ENCODE measurements at regions of chr20 and their contacts with region 1.

Region 1: DNA sequence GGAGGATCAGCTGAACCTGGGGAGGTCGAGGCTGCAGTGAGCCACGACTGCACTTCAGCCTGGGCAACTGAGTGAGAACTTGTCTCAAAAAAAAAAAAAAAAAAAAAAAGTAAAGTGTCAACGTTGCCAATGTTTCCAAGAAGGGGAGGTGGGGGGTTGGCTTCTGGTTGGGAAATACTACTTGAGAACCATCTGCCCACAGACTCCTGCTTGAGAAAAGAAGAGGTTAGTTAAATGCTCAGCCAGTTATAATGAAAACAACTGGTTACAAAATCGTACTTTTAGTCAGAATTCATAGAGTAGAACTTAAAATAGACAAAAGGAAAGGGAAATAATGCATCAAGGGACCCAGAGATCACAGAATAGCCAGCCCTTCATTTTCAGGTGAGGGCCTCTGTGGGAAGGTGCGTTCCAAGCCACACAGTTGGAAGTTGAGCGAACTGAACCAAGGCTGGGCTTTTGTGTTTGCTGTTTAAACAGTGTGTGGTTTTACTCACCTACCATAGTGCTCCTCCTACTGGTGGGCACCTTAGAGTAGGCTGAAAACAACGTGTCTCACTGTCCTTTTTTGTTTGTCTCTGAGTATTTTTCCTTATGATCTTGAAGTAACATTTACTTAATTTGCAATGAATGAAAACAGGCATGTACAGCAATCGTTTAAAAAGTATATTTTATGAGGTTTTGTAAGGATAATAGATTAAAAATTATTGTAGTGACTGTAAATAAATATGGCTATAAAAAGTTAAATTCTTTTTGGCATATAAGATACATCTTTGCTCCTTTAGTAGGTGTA is 200.7 kb downstream of the BCAS1 start:
- DNase-seq: peak; percentile 83
- ATAC-seq: peak; percentile 84
- H3K4me3 Mint-ChIP-seq: peak overlapping the region; percentile 18
- H3K27ac Mint-ChIP-seq: peak overlapping the region; percentile 90
- H3K4me1 Mint-ChIP-seq: peaks cover 75% of the 10 kb centered on the region
- H3K27me3 Mint-ChIP-seq: no peaks in the 10 kb centered on the region

Region 2: GRCh38 chr20:53316221-53316937 is 553.3 kb before region 1 on chr20:
- CTCF ChIA-PET with region 1: no interaction called
- POLR2A ChIA-PET with region 1: no interaction called
- intact Hi-C with region 1: no loop called
- DNase-seq: no peak
- ATAC-seq: peak; percentile 78
- H3K4me3 Mint-ChIP-seq: no peak overlapping the region
- H3K27ac Mint-ChIP-seq: no peak overlapping the region
- H3K4me1 Mint-ChIP-seq: peaks cover 19% of the 10 kb centered on the region
- H3K27me3 Mint-ChIP-seq: no peaks in the 10 kb centered on the region

Region 3: DNA sequence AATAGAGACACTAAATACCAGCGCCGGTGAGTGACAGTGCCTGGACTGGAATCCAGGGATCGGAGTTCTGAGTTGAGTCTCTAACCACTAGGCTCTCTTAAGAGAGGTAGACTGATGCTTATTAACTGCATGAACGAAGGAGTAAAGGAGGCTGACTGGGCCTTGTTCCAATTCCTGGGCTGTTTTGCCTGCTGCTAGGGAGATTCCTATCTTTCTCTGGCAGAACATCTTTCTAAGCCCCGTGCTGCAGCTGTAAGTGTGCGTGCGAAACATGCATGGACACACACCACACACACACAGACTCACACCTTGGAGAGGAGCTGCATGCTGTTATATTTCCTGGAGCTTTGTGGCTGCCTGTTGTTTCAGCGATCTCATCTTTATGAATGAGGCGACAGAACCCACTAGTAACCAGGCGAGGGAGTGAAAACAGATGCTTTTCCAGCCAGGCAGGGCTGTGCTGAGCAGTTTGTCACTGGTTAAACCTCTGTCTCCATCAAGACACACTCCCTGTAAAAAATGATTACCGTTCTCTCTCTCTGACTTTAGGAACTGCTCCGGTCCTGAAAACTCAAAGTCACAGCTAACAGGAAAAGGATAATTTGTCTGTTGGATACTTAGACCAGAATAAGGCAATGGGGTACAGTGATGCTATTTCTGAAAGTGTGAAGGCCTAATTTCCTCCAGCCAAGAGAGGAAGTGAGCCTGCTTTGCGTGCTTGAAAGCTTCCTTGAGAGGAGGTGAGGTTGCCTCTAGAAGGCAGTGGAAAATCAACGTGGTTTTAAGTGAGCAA is 118.6 kb before region 1 on chr20:
- CTCF ChIA-PET with region 1: no interaction called
- POLR2A ChIA-PET with region 1: no interaction called
- intact Hi-C with region 1: loop called (anchors 5 kb)
- DNase-seq: peak; percentile 60
- ATAC-seq: peak; percentile 70
- H3K4me3 Mint-ChIP-seq: peak overlapping the region; percentile 22
- H3K27ac Mint-ChIP-seq: peak overlapping the region; percentile 96
- H3K4me1 Mint-ChIP-seq: peaks cover 73% of the 10 kb centered on the region
- H3K27me3 Mint-ChIP-seq: no peaks in the 10 kb centered on the region

Region 4: DNA sequence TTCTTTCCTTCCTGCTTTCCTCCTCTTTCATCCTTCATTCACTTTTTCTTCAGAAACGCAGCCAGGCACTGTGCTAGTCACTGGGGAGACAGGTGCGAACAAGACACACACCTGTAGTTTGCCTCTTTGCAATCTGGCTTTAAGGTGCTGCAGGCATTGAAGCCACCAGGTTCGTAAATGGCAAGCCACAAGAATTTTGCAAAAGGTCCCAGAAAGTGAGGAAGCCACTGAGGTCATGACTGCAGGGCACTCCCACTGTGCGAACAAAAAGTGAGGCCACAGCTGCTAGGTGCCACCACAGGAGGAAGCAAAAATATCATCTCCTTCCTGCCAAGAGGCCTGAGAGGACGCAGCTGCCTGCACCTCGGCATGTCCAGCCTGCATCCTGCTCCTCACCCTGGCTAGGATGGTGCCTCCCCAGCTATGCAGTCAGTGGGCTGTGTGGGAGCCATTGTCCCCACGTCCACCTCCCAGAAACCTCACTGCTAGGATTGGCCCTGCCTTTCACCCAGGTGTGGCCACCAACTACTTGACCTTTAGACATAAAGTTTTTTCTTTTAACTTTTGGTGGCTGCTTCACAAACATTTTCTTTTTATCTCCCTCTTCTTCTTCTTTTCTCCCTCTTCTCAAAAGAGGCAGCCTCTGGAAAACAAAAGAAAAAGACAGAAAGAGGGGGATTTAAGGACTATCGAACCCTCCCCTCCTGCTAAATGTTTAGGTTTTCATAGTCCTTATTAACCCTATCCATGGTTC is 30.1 kb before region 1 on chr20:
- CTCF ChIA-PET with region 1: interaction called, 4 read pairs
- POLR2A ChIA-PET with region 1: no interaction called
- intact Hi-C with region 1: loop called (anchors 1 to 2 kb)
- DNase-seq: peak; percentile 66
- ATAC-seq: peak; percentile 16
- H3K4me3 Mint-ChIP-seq: peak overlapping the region; percentile 45
- H3K27ac Mint-ChIP-seq: peak overlapping the region; percentile 62
- H3K4me1 Mint-ChIP-seq: peaks cover 69% of the 10 kb centered on the region
- H3K27me3 Mint-ChIP-seq: no peaks in the 10 kb centered on the region

Region 5: GRCh38 chr20:53883098-53883811 is 13.6 kb after region 1 on chr20:
- CTCF ChIA-PET with region 1: interaction called, 4 read pairs
- POLR2A ChIA-PET with region 1: interaction called, 3 read pairs
- intact Hi-C with region 1: loop called in 1 of 2 experiments (anchors 1 kb)
- DNase-seq: peak; percentile 30
- ATAC-seq: no peak
- H3K4me3 Mint-ChIP-seq: no peak overlapping the region
- H3K27ac Mint-ChIP-seq: no peak overlapping the region
- H3K4me1 Mint-ChIP-seq: peaks cover 50% of the 10 kb centered on the region
- H3K27me3 Mint-ChIP-seq: no peaks in the 10 kb centered on the region

Region 6: DNA sequence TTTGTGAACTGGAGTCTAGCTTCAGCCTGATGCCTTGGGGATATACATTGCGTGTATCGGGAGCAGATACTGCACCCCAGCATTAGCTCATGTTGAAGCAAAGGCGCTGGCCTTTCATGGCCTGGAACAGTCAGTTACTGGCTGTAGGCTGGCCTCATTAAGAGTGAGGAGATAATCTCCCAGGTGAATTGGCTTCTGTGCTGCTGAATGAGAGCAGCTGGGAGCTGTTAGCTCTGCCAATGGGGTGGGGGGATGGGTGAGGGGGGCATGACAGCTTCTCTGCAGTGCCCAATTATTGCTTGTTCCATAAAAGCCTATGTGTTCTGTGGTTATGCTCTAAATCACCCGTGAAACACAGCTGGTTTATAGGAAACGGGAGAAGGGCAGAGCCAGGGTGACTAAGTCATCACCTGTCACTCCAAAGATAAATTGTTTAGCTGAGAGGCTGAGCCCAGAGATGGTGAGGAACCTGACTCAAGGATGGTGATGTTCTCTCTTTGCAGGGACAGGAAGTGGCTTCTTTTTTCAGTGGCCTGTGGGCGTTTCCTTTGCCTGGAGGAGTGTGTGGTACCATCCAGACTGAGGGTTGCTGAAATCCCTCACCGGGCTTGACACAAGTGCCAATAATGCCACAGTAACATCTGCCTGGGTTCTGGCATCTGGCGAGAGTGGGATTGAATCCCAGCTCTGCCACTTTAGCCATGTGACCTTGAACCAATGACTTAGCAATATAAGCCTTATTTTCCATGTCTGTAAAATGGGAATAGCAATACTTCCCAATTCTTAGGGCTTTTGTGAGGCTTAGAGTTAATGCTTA is 29.9 kb after region 1 on chr20:
- CTCF ChIA-PET with region 1: interaction called, 10 read pairs
- POLR2A ChIA-PET with region 1: interaction called, 3 read pairs
- intact Hi-C with region 1: no loop called
- DNase-seq: peak; percentile 89
- ATAC-seq: peak; percentile 92
- H3K4me3 Mint-ChIP-seq: peak overlapping the region; percentile 10
- H3K27ac Mint-ChIP-seq: peak overlapping the region; percentile 92
- H3K4me1 Mint-ChIP-seq: peaks cover 49% of the 10 kb centered on the region
- H3K27me3 Mint-ChIP-seq: no peaks in the 10 kb centered on the region